T-cell (primary cell): ENCODE measurements at regions of chr4 and their contacts with region 1.

Region 1: GRCh38 chr4:54495101-54495500 is 162.7 kb upstream of the KIT start:
- DNase-seq: no peak
- ATAC-seq: no peak
- H3K4me3 ChIP-seq: no peak overlapping the region
- H3K4me3 Mint-ChIP-seq: no peak overlapping the region
- H3K27ac ChIP-seq: no peak overlapping the region
- H3K27ac Mint-ChIP-seq: no peak overlapping the region
- H3K4me1 ChIP-seq: no peaks in the 10 kb centered on the region
- H3K4me1 Mint-ChIP-seq: no peaks in the 10 kb centered on the region
- H3K27me3 ChIP-seq: peaks cover 0 to 3% of the 10 kb centered on the region in 2 experiments
- H3K27me3 Mint-ChIP-seq: peaks cover 3 to 9% of the 10 kb centered on the region in 2 donors

Region 2: DNA sequence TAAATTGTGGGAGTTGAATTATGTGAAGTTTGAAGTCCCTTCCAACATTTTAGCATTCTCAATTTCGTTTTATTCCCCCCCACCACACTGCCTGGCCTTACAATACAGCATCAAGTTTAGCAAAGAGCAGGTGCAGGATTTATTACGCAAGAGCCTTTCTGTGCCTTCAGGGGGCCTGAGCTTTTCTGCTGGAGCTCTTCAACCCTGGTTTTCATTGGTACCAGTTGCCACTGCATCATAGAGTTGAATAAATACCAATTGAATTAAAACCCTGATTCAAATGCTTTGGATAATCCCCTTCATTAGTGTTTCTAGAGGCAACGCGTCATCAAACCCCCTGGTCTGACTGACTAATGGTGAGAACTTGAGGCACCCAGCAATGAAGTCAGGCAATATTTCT is 119.0 kb after region 1 on chr4:
- CTCF ChIA-PET with region 1: no interaction called
- POLR2A ChIA-PET with region 1: no interaction called
- DNase-seq: no peak
- ATAC-seq: no peak
- H3K4me3 ChIP-seq: no peak overlapping the region
- H3K4me3 Mint-ChIP-seq: no peak overlapping the region
- H3K27ac ChIP-seq: no peak overlapping the region
- H3K27ac Mint-ChIP-seq: no peak overlapping the region
- H3K4me1 ChIP-seq: no peaks in the 10 kb centered on the region
- H3K4me1 Mint-ChIP-seq: no peaks in the 10 kb centered on the region
- H3K27me3 ChIP-seq: peaks cover 0 to 8% of the 10 kb centered on the region in 2 experiments
- H3K27me3 Mint-ChIP-seq: peaks cover 2 to 16% of the 10 kb centered on the region in 2 donors

Region 3: GRCh38 chr4:55503164-55503563 is 1008.1 kb after region 1 on chr4:
- CTCF ChIA-PET with region 1: no interaction called
- POLR2A ChIA-PET with region 1: interaction called in 1 of 2 experiments, 11 read pairs
- DNase-seq: no peak
- ATAC-seq: no peak
- H3K4me3 ChIP-seq: no peak overlapping the region
- H3K4me3 Mint-ChIP-seq: no peak overlapping the region
- H3K27ac ChIP-seq: no peak overlapping the region
- H3K27ac Mint-ChIP-seq: no peak overlapping the region
- H3K4me1 ChIP-seq: no peaks in the 10 kb centered on the region
- H3K4me1 Mint-ChIP-seq: peaks cover 0 to 5% (median 5%) of the 10 kb centered on the region in 3 donors
- H3K27me3 ChIP-seq: no peaks in the 10 kb centered on the region
- H3K27me3 Mint-ChIP-seq: no peaks in the 10 kb centered on the region